Activated CD4-positive, alpha-beta T cell treated with anti-CD3 and anti-CD28 coated beads, Interleukin-2, amount 10 ng/mL, durations not matched to agents 24 days and 14 days (primary cell): ENCODE measurements at regions of chr3 and their contacts with region 1.

Region 1: DNA sequence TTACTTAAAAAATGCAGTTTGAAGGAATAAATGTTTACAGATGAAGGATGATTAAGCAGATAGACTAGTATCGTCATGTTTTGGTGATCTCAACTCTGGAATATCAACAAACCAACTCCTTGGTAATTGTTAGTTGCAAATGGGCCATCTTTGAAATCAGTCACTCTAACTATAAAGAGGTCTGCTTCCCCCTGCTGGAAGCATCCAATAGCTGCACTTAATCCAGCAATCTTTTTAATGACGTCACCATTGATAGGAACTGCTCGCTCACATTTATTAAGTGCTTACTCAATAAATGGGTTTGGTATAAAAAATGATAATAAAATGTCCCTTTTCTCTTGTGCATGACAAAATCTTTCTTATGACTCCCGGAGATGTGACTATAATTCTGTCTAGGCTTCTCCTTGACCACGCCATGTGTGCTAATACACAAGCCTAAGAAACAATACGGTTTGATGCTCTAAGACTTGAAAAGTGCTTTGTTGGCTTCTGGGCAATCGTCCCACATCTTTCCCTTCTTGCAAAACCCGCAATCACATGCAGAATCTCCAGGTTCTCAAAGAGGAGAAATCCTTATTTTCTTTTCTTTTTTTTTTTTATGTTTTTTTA is 227.6 kb upstream of the POU1F1 start:
- DNase-seq: peak; percentile 67
- H3K4me3 Mint-ChIP-seq: no peak overlapping the region
- H3K27ac Mint-ChIP-seq: no peak overlapping the region
- H3K4me1 Mint-ChIP-seq: no peaks in the 10 kb centered on the region
- H3K27me3 Mint-ChIP-seq: no peaks in the 10 kb centered on the region

Region 2: GRCh38 chr3:87260270-87260669 is 243.7 kb before region 1 on chr3:
- intact Hi-C with region 1: loop called (anchors 10 kb)
- DNase-seq: peak; percentile 82
- H3K4me3 Mint-ChIP-seq: no peak overlapping the region
- H3K27ac Mint-ChIP-seq: no peak overlapping the region
- H3K4me1 Mint-ChIP-seq: no peaks in the 10 kb centered on the region
- H3K27me3 Mint-ChIP-seq: peaks cover 8% of the 10 kb centered on the region

Region 3: DNA sequence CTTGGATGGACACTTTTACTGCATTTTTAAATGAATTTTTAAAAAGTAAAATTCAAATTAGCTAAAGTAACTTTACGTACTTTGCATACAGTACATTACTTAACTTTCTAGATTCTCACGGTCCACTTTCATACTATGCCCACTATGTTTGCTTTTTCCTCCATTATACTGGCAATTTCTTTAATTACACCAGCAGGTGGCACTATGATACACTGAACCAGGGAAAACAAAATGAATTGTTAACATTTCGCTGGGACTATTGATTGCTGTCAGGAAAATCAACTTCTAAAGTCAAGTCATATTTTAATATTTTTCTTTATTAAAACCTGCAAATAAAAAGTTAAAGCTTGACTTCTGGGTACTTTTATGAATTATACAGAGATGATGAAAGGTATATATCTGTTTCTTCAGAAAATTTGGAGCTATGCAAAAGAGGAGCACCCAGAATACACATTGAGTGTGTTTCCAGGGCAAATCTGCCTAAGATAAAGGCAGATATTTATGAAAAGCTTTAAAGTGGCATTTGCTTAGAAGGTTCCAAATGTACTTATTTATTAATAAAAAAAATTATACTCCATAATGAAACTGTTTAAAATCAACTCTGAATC is 205.8 kb before region 1 on chr3:
- intact Hi-C with region 1: loop called (anchors 1 kb)
- DNase-seq: no peak
- H3K4me3 Mint-ChIP-seq: no peak overlapping the region
- H3K27ac Mint-ChIP-seq: no peak overlapping the region
- H3K4me1 Mint-ChIP-seq: no peaks in the 10 kb centered on the region
- H3K27me3 Mint-ChIP-seq: peaks cover 2% of the 10 kb centered on the region